Activated naive CD8-positive, alpha-beta T cell treated with anti-CD3 and anti-CD28 coated beads, Interleukin-2, amount 10 ng/mL, durations not matched to agents 7 days and 5 days (primary cell): ENCODE measurements at regions of chrX and their contacts with region 1.

Region 1: GRCh38 chrX:65688403-65688871 is 21.0 kb downstream of the MSN start:
- DNase-seq: no peak
- ATAC-seq: peak; percentile 15
- H3K4me3 Mint-ChIP-seq: peak overlapping the region; percentile 58
- H3K27ac Mint-ChIP-seq: peak overlapping the region; percentile 76
- H3K4me1 Mint-ChIP-seq: peaks cover 67% of the 10 kb centered on the region
- H3K27me3 Mint-ChIP-seq: no peaks in the 10 kb centered on the region

Region 2: GRCh38 chrX:65674204-65674893 is 14.1 kb before region 1 on chrX:
- POLR2A ChIA-PET with region 1: interaction called, 10 read pairs
- DNase-seq: no peak
- ATAC-seq: peak; percentile 75
- H3K4me3 Mint-ChIP-seq: peak overlapping the region; percentile 94
- H3K27ac Mint-ChIP-seq: peak overlapping the region; percentile 93
- H3K4me1 Mint-ChIP-seq: peaks cover 64% of the 10 kb centered on the region
- H3K27me3 Mint-ChIP-seq: no peaks in the 10 kb centered on the region

Region 3: GRCh38 chrX:65706041-65706828 is 17.8 kb after region 1 on chrX:
- POLR2A ChIA-PET with region 1: no interaction called
- DNase-seq: no peak
- ATAC-seq: peak; percentile 35
- H3K4me3 Mint-ChIP-seq: peak overlapping the region; percentile 72
- H3K27ac Mint-ChIP-seq: peak overlapping the region; percentile 78
- H3K4me1 Mint-ChIP-seq: peaks cover 55% of the 10 kb centered on the region
- H3K27me3 Mint-ChIP-seq: no peaks in the 10 kb centered on the region

Region 4: GRCh38 chrX:65731684-65732289 is 43.4 kb after region 1 on chrX:
- POLR2A ChIA-PET with region 1: no interaction called
- DNase-seq: no peak
- ATAC-seq: no peak
- H3K4me3 Mint-ChIP-seq: no peak overlapping the region
- H3K27ac Mint-ChIP-seq: peak overlapping the region; percentile 34
- H3K4me1 Mint-ChIP-seq: peaks cover 21% of the 10 kb centered on the region
- H3K27me3 Mint-ChIP-seq: no peaks in the 10 kb centered on the region